Naive thymus-derived CD8-positive, alpha-beta T cell (primary cell): ENCODE measurements at regions of chr19 and their contacts with region 1.

Region 1: GRCh38 chr19:4065430-4066175 is 1.1 kb downstream of the ZBTB7A start:
- DNase-seq: peak; percentile 93 to 99 (median 98)
- ATAC-seq: peak; percentile 60 to 76
- H3K4me3 Mint-ChIP-seq: peak overlapping the region; percentile 50 to 88 (median 67)
- H3K27ac Mint-ChIP-seq: peak overlapping the region in 7 of 10 donors; percentile 32 to 81 (median 65)
- H3K4me1 Mint-ChIP-seq: peaks cover 7 to 53% (median 42%) of the 10 kb centered on the region in 4 donors
- H3K27me3 Mint-ChIP-seq: no peaks in the 10 kb centered on the region

Region 2: GRCh38 chr19:3984908-3985642 is 80.5 kb before region 1 on chr19 and contains the start of gene EEF2:
- POLR2A ChIA-PET with region 1: interaction called, 17 read pairs
- DNase-seq: peak; percentile 84 to 97 (median 92)
- ATAC-seq: peak; percentile 57 to 64
- H3K4me3 Mint-ChIP-seq: peak within 1 kb of the TSS; percentile 92 to 99 (median 97)
- H3K27ac Mint-ChIP-seq: peak within 1 kb of the TSS; percentile 92 to 98 (median 97)
- H3K4me1 Mint-ChIP-seq: peaks cover 14 to 67% (median 49%) of the 10 kb centered on the region in 4 donors
- H3K27me3 Mint-ChIP-seq: no peaks in the 10 kb centered on the region
- polyA plus RNA-seq, gene EEF2: 546 to 682 (median 600) TPM

Region 3: DNA sequence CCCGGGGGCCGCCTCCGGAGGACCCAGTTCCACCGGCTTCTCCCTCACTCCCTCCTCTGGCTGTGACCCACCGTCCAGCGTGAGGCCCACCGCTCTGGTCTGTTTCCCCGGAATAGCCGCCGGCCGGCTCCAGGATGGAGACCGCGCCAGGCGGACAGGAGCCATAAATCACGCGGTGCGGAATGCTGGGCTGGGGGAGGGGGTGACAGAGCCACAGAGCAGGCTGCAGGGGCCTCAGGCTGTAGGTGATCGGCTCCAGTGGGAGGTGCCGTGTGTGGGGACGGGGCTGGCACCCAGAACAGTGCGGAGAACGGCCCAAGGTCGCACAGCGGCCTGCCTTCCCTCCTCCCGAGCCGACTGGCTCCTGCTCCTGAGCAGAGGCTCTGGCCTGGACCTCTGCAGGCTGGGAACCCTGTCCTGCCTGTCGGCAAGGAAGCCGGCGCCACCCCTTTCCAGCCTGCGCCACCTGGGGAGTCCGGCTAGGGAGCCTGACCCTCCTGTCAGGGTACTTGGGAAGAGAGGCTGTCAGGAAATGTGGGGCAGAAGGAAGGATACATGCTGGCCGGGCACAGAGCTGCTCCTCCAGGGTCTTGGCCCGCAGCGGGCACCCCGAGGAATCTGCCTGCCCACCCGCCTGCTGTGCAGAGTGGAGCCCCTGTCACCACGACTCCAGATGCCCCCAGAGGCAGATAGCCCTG is 49.7 kb before region 1 on chr19:
- POLR2A ChIA-PET with region 1: no interaction called
- DNase-seq: no peak
- ATAC-seq: no peak
- H3K4me3 Mint-ChIP-seq: peak overlapping the region in 1 of 10 donors; percentile 24
- H3K27ac Mint-ChIP-seq: peak overlapping the region in 2 of 10 donors; percentile 7 to 41
- H3K4me1 Mint-ChIP-seq: peaks cover 9 to 51% (median 23%) of the 10 kb centered on the region in 4 donors
- H3K27me3 Mint-ChIP-seq: no peaks in the 10 kb centered on the region

Region 4: GRCh38 chr19:4044990-4045465 is 20.6 kb before region 1 on chr19:
- POLR2A ChIA-PET with region 1: interaction called, 11 read pairs
- DNase-seq: no peak
- ATAC-seq: no peak
- H3K4me3 Mint-ChIP-seq: peak overlapping the region in 1 of 10 donors; percentile 67
- H3K27ac Mint-ChIP-seq: peak overlapping the region in 8 of 10 donors; percentile 3 to 98 (median 84)
- H3K4me1 Mint-ChIP-seq: peaks cover 12 to 30% (median 19%) of the 10 kb centered on the region in 4 donors
- H3K27me3 Mint-ChIP-seq: no peaks in the 10 kb centered on the region

Region 5: DNA sequence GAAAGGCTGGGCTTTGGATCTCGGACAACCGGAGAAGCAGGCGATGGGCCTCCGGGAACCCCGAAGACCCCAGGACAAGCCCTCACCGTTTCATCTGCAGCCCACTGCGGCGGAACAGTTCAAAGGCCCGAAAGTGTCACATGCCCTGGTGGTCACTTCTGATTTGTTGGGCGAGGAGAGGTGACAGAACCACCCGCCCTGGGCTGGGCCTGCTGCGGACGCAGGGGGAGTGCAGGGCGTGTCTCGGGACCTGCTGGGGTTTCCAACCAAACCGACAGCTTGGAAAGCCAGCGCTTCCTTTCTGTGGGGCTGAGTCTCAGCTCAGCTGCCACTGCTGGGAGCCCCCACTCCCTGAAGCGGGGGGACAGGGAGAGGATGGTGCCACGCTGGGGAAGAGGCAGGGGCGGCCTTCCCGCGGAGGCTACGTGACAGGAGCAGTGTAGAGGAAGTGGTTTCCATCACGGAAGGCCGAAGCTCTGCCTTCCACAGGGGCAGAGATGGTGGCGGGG is 23.9 kb after region 1 on chr19:
- POLR2A ChIA-PET with region 1: interaction called, 37 read pairs
- DNase-seq: peak in 7 of 10 donors; percentile 14 to 64 (median 40)
- ATAC-seq: peak; percentile 48 to 56
- H3K4me3 Mint-ChIP-seq: peak overlapping the region; percentile 58 to 84 (median 78)
- H3K27ac Mint-ChIP-seq: peak overlapping the region; percentile 78 to 96 (median 94)
- H3K4me1 Mint-ChIP-seq: peaks cover 18 to 56% (median 46%) of the 10 kb centered on the region in 4 donors
- H3K27me3 Mint-ChIP-seq: no peaks in the 10 kb centered on the region

Region 6: DNA sequence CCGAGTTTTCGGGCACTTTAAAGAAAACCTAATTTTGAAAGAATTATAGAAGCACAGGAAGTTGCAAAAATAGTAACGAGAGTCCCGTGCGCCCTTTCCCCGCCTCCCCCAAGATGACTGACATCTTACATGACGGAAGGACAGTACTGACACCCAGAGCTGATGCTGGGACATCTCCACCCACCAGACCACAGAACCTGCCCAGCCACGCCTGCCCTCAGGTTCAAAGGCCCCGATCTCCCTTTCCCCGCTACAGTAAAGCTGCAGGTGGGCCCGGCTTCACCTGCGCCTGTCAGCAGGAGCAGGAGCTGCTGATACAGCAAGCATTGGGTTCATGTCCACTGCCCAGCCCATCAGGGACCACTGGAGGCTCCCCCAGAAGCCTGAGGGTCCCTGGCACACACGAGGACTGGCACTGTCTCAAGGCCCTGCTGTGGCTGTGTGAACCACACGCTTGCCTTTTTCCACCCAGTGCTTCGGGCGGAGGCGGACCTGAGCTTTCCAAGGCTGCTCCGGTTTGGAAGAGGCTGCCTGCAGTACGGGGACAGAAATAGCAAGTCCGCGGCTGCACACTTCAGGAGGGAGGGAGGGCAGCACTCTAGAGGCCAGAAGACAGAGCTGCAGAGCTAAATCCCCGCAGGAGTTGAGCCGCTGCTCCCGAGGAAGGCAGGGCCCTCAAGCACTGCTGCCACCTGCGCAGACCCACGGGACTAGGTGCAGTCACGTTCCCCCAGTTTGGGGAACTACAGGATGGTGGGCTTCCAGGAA is 49.6 kb after region 1 on chr19:
- POLR2A ChIA-PET with region 1: interaction called, 18 read pairs
- DNase-seq: peak; percentile 48 to 89 (median 76)
- ATAC-seq: peak; percentile 99 to 100
- H3K4me3 Mint-ChIP-seq: peak overlapping the region; percentile 26 to 83 (median 68)
- H3K27ac Mint-ChIP-seq: peak overlapping the region; percentile 68 to 95 (median 88)
- H3K4me1 Mint-ChIP-seq: peaks cover 14 to 72% (median 47%) of the 10 kb centered on the region in 4 donors
- H3K27me3 Mint-ChIP-seq: no peaks in the 10 kb centered on the region

Region 7: GRCh38 chr19:4194353-4194752 is 128.8 kb after region 1 on chr19:
- POLR2A ChIA-PET with region 1: no interaction called
- DNase-seq: no peak
- ATAC-seq: no peak
- H3K4me3 Mint-ChIP-seq: no peak overlapping the region
- H3K27ac Mint-ChIP-seq: no peak overlapping the region
- H3K4me1 Mint-ChIP-seq: peaks cover 12 to 15% (median 13%) of the 10 kb centered on the region in 4 donors
- H3K27me3 Mint-ChIP-seq: peaks cover 32 to 66% (median 44%) of the 10 kb centered on the region in 5 donors